ENCODE measurements at regions of chr6 and their contacts with region 1.

Region 1: DNA sequence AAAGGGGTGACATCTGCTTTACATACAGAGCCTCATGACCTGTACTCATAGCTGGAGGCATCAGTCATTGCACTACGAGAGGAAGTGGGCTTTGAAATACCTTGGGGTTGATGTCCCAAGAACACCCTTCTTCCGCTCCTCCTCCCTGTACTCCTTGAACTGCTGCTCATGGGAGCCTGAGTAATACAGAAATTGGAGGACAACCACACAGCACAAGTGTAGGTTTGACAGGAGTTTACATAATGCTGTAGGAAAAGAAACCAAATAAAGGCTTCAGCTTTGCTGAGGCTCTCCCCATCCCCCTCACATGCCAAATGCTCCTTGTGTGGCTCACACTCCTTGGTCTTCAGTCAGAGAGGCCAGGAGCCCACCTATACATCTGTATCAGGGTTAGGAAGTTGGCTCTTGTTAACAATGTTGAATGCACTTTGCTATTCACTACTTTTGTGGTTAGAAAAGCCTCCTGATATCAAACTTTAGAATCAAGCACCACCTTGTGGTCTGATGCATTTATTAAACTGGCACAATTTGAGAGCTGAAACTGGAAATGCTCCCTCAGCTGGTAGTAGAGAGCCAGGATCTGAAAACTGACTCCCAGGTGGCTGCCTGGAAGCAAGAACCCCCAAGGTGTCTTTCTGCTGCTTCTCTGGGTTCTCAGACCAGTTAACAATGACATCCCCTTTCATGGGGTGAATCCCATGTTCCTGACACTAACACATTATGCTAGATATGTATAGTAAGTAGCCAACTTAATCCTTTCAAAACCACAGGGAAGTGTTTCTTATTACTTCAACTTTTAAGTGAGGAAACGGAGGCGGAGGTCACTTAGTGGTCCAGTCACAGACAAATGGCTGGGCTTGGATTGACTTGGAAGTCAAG is 56.2 kb upstream of the EDN1 start:
- DNase-seq: peak; percentile 49
- H3K4me3 Mint-ChIP-seq: no peak overlapping the region
- H3K27ac Mint-ChIP-seq: peak overlapping the region; percentile 56
- H3K4me1 Mint-ChIP-seq: peaks cover 30% of the 10 kb centered on the region
- H3K27me3 Mint-ChIP-seq: peaks cover 3% of the 10 kb centered on the region

Region 2: GRCh38 chr6:11653028-11653583 is 580.8 kb before region 1 on chr6:
- CTCF ChIA-PET with region 1: interaction called, 18 read pairs
- POLR2A ChIA-PET with region 1: no interaction called
- DNase-seq: peak; percentile 61
- H3K4me3 Mint-ChIP-seq: no peak overlapping the region
- H3K27ac Mint-ChIP-seq: peak overlapping the region; percentile 28
- H3K4me1 Mint-ChIP-seq: peaks cover 24% of the 10 kb centered on the region
- H3K27me3 Mint-ChIP-seq: peaks cover 11% of the 10 kb centered on the region

Region 3: GRCh38 chr6:12011276-12012076 is 222.5 kb before region 1 on chr6:
- CTCF ChIA-PET with region 1: interaction called, 5 read pairs
- POLR2A ChIA-PET with region 1: interaction called, 14 read pairs
- DNase-seq: peak; percentile 97
- H3K4me3 Mint-ChIP-seq: peak overlapping the region; percentile 82
- H3K27ac Mint-ChIP-seq: peak overlapping the region; percentile 92
- H3K4me1 Mint-ChIP-seq: peaks cover 43% of the 10 kb centered on the region
- H3K27me3 Mint-ChIP-seq: no peaks in the 10 kb centered on the region

Region 4: GRCh38 chr6:12289933-12290820 is 56.2 kb after region 1 on chr6 and contains the start of gene EDN1:
- CTCF ChIA-PET with region 1: interaction called, 11 read pairs
- POLR2A ChIA-PET with region 1: no interaction called
- DNase-seq: peak; percentile 55
- H3K4me3 Mint-ChIP-seq: peak within 1 kb of the TSS; percentile 62
- H3K27ac Mint-ChIP-seq: peak within 1 kb of the TSS; percentile 3
- H3K4me1 Mint-ChIP-seq: peaks cover 13% of the 10 kb centered on the region
- H3K27me3 Mint-ChIP-seq: peaks cover 46% of the 10 kb centered on the region
- total RNA-seq, gene EDN1: 0.10 TPM in 1 of 2 experiments, not detected in the other

Measured in activated CD4-positive, alpha-beta memory T cell treated with anti-CD3 and anti-CD28 coated beads, Interleukin-2, amount 10 ng/mL, durations not matched to agents 7 days and 5 days (primary cell).